GM12878 (cell line): ENCODE measurements at regions of chr11 and their contacts with region 1.

Region 1: GRCh38 chr11:71998662-71999310 is at the start of gene IL18BP:
- DNase-seq: peak; percentile 44
- ATAC-seq: peak; percentile 54
- H3K4me3 ChIP-seq: peak within 1 kb of the TSS; percentile 50; the same call in 1 of the 2 replicates
- H3K27ac ChIP-seq: peak within 1 kb of the TSS; percentile 85
- H3K4me1 ChIP-seq: peaks cover 37% of the 10 kb centered on the region
- H3K27me3 ChIP-seq: no peaks in the 10 kb centered on the region
- CTCF ChIP-seq: no peak
- EP300 ChIP-seq: no peak
- POLR2A ChIP-seq: peak; percentile 59; the same call in 1 of the 2 replicates
- RAD21 ChIP-seq: no peak
- polyA plus RNA-seq, gene IL18BP: 2.6 to 3.5 TPM

Region 2: GRCh38 chr11:71543866-71544265 is 454.9 kb before region 1 on chr11:
- CTCF ChIA-PET with region 1: no interaction called
- POLR2A ChIA-PET with region 1: no interaction called
- RAD21 ChIA-PET with region 1: no interaction called
- SMC1A ChIA-PET with region 1: no interaction called
- in situ Hi-C with region 1: no loop called
- intact Hi-C with region 1: no loop called
- DNase-seq: no peak
- ATAC-seq: no peak
- H3K4me3 ChIP-seq: no peak overlapping the region
- H3K27ac ChIP-seq: 0 out of 2 replicates have a peak overlapping the region, but pooled peaks have one; percentile 18
- H3K4me1 ChIP-seq: peaks cover 41% of the 10 kb centered on the region
- H3K27me3 ChIP-seq: no peaks in the 10 kb centered on the region
- CTCF ChIP-seq: no peak
- EP300 ChIP-seq: no peak
- POLR2A ChIP-seq: no peak
- RAD21 ChIP-seq: no peak

Region 3: DNA sequence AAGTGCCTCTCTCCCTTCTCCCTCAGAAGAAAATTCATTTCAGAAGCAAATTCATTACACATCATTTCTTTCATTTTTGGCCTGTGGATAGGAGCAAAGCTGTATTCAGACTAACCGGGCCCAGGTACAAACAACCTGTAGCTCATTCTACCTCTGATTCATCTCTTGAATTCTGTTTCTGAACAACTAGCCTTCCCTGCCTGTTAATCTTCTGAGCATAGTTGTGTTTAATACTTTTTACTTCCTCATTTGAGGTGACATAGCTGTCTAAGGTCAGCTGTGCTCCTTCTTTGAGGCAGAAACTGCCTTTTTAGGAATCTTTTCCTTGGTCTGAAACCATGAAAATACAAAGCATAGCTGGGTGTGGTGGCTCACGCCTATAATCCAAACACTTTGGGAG is 12.7 kb before region 1 on chr11:
- CTCF ChIA-PET with region 1: interaction called, 3 read pairs
- POLR2A ChIA-PET with region 1: interaction called, 4 read pairs
- RAD21 ChIA-PET with region 1: interaction called, 5 read pairs
- SMC1A ChIA-PET with region 1: interaction called, 12 read pairs
- in situ Hi-C with region 1: no loop called
- intact Hi-C with region 1: no loop called
- DNase-seq: no peak
- ATAC-seq: peak; percentile 77
- H3K4me3 ChIP-seq: no peak overlapping the region
- H3K27ac ChIP-seq: peak overlapping the region; percentile 66
- H3K4me1 ChIP-seq: peaks cover 26% of the 10 kb centered on the region
- H3K27me3 ChIP-seq: no peaks in the 10 kb centered on the region
- CTCF ChIP-seq: no peak
- EP300 ChIP-seq: no peak
- POLR2A ChIP-seq: no peak
- RAD21 ChIP-seq: no peak